Activated B cell treated with CpG ODN at 0.5 μM for 24 hours (primary cell): ENCODE measurements at regions of chr21 and their contacts with region 1.

Region 1: DNA sequence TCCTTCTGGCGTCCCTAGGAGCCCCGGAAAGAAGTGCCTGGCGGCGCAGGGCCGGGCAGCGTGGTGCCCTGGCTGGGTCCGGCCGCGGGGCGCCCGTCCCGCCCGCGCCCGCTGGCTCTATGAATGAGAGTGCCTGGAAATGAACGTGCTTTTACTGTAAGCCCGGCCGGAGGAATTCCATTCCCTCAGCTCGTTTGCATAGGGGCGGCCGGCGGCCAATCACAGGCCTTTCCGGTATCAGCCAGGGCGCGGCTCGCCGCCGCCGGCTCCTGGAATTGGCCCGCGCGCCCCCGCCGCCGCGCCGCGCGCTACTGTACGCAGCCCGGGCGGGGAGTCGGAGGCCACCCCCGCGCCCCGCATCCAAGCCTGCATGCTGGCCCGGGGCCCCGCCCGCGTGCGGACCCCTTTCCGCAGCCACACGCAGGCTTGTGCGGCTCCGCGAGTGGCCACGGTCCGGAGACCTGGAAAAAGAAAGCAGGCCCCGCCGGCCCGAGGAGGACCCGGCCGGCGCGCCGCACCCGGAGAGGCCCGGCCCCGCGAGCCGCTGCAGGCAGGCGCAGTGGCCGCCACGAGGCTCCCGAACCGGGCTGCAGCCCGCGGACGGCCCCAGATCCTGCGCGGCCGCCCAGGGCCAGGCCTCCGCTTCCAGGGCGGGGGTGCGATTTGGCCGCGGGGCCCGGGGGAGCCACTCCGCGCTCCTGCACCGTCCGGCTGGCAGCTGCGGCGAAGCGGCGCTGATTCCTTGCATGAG is 160.4 kb downstream of the RUNX1 start:
- DNase-seq: peak; percentile 82
- ATAC-seq: peak; percentile 45
- H3K4me3 Mint-ChIP-seq: peak overlapping the region; percentile 91
- H3K27ac Mint-ChIP-seq: peak overlapping the region; percentile 99
- H3K4me1 Mint-ChIP-seq: peaks cover 53% of the 10 kb centered on the region
- H3K27me3 Mint-ChIP-seq: peaks cover 1% of the 10 kb centered on the region
- CTCF ChIP-seq: no peak

Region 2: GRCh38 chr21:34807146-34807880 is 81.4 kb before region 1 on chr21:
- CTCF ChIA-PET with region 1: interaction called, 7 read pairs
- POLR2A ChIA-PET with region 1: interaction called, 26 read pairs
- intact Hi-C with region 1: loop called (anchors 1 kb)
- DNase-seq: no peak
- ATAC-seq: peak; percentile 83
- H3K4me3 Mint-ChIP-seq: no peak overlapping the region
- H3K27ac Mint-ChIP-seq: peak overlapping the region; percentile 71
- H3K4me1 Mint-ChIP-seq: peaks cover 48% of the 10 kb centered on the region
- H3K27me3 Mint-ChIP-seq: no peaks in the 10 kb centered on the region
- CTCF ChIP-seq: no peak

Region 3: DNA sequence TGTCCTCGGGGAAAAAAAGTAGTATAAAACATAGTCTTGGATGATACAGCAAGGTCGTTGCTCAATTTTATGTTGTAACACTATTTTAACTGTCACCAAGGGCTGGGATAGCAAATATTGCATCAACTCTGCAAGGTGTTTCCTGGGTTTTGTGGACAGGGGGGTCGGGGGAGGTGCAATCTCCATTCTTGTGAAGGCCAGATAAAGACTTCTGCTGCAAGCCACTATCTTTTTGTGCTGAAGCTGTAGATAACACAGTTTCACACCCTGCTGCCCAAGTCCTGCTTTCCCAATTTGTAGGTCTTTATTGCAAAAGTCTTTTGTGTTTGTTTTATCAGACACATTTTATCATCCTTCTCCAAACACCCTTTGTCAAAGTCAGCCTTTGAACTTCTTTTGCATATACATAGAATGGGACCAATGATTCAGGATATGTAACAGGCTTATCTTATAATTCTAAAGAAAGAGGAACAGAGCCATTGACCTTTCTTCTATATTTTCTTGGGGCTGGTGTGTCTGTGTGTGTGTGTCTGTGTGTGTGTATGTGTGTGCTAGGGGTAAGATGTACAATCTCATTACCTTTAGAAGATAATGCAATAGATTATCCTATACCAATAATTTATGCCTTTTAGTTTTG is 19.8 kb after region 1 on chr21:
- CTCF ChIA-PET with region 1: interaction called, 3 read pairs
- POLR2A ChIA-PET with region 1: interaction called, 24 read pairs
- intact Hi-C with region 1: loop called (anchors 2 kb)
- DNase-seq: no peak
- ATAC-seq: peak; percentile 40
- H3K4me3 Mint-ChIP-seq: peak overlapping the region; percentile 3
- H3K27ac Mint-ChIP-seq: no peak overlapping the region
- H3K4me1 Mint-ChIP-seq: peaks cover 66% of the 10 kb centered on the region
- H3K27me3 Mint-ChIP-seq: no peaks in the 10 kb centered on the region
- CTCF ChIP-seq: no peak

Region 4: DNA sequence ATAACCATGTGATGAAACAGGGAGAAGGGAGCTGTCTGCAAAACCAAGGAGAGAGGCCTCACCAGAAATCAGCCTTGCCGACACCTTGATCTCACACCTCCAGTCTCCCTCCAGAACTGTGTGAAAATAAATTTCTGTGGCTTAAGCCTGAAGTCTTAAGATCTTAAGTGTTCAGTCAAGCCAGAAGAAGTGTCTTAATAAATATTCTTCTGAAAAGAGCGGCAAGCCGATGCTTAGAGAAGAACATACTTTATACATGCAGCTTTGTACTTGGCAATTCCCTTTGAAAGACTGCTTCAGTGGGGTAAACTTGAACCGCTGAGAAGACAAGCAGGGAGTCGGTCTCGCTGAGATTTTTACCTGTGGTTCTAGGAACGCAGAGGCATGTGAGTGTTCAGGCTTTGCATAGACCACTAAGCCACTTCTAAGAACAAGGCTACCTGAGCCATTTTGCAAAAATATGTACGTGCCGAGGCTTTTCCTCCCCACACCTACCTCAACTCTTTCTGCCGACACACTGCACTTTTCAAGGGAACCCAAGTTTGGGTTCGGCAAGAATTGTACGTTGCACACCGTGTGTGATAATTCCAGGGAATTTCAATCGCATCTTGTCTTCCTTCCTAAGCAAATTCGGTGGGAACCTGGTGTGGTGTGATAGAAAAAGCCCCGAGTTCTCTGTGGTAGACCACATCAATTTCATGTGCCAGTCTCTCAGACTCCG is 157.0 kb after region 1 on chr21:
- CTCF ChIA-PET with region 1: interaction called, 39 read pairs
- POLR2A ChIA-PET with region 1: interaction called, 290 read pairs
- intact Hi-C with region 1: loop called (anchors 1 kb)
- DNase-seq: no peak
- ATAC-seq: no peak
- H3K4me3 Mint-ChIP-seq: peak overlapping the region; percentile 91
- H3K27ac Mint-ChIP-seq: peak overlapping the region; percentile 97
- H3K4me1 Mint-ChIP-seq: peaks cover 98% of the 10 kb centered on the region
- H3K27me3 Mint-ChIP-seq: no peaks in the 10 kb centered on the region
- CTCF ChIP-seq: no peak

Region 5: DNA sequence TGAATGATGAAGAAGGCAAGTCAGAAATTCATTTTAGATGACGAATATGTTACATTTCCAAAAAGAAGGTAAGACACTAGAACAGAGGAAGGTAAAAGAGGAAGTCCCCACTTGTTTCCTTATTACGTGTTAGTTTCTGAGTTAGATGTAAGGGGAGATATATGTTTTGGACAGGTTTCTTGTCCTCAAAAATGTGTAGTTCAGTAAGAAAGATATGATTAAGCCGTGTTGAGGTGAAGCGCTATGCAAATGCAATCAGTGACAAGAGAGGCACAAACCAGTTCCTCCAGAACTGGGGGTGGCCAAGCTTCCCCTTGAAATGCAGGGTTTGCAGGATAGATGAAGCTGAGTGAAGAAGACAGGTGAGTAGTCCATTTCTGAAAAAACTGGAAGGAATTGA is 453.7 kb after region 1 on chr21:
- CTCF ChIA-PET with region 1: interaction called, 3 read pairs
- POLR2A ChIA-PET with region 1: interaction called, 4 read pairs
- intact Hi-C with region 1: loop called (anchors 2 kb)
- DNase-seq: no peak
- ATAC-seq: peak; percentile 78
- H3K4me3 Mint-ChIP-seq: peak overlapping the region; percentile 44
- H3K27ac Mint-ChIP-seq: peak overlapping the region; percentile 81
- H3K4me1 Mint-ChIP-seq: peaks cover 36% of the 10 kb centered on the region
- H3K27me3 Mint-ChIP-seq: no peaks in the 10 kb centered on the region
- CTCF ChIP-seq: no peak

Region 6: DNA sequence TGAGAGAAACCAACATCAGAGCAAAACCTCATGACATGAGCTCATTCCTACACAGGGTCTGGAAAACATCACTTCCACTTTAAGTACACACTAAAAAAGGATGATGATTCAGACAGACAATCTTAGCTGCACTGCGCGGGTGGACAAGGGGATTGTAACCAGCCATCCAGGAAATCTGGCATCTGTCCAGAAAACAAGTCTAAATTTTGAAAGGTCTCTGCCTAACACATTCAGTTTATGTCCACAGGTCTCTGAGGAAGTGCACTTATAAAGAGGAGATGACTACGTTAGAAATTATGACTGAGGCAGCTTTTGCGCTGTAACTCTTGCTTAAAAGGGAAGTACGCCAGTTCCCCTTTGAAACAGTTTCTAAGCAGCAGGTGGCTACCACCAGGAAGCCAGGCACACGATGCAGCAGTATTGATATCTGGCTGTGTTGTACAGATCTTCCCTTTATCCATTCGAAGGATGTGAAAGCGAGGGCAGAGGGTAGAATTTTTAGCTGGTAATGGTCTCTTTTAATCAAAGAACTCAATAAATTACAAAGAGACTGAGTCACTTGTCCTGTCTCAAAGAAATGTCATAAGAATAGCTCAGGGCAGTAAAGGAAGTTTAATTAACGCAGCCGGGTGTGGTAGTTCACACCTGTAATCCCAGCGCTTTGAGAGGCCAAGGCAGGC is 1043.6 kb after region 1 on chr21:
- CTCF ChIA-PET with region 1: no interaction called
- POLR2A ChIA-PET with region 1: interaction called, 6 read pairs
- intact Hi-C with region 1: loop called (anchors 5 kb)
- DNase-seq: no peak
- ATAC-seq: peak; percentile 93
- H3K4me3 Mint-ChIP-seq: no peak overlapping the region
- H3K27ac Mint-ChIP-seq: no peak overlapping the region
- H3K4me1 Mint-ChIP-seq: no peaks in the 10 kb centered on the region
- H3K27me3 Mint-ChIP-seq: no peaks in the 10 kb centered on the region
- CTCF ChIP-seq: no peak